Natural killer cell (primary cell): ENCODE measurements at regions of chr3 and their contacts with region 1.

Region 1: GRCh38 chr3:32018757-32019564 is 37.4 kb downstream of the ZNF860 start:
- DNase-seq: peak in 1 of 2 donors; percentile 64
- ATAC-seq: peak in 1 of 3 donors; percentile 52
- H3K4me3 ChIP-seq: no peak overlapping the region
- H3K4me3 Mint-ChIP-seq: no peak overlapping the region
- H3K27ac ChIP-seq: no peak overlapping the region
- H3K27ac Mint-ChIP-seq: no peak overlapping the region
- H3K4me1 ChIP-seq: no peaks in the 10 kb centered on the region
- H3K4me1 Mint-ChIP-seq: no peaks in the 10 kb centered on the region
- H3K27me3 ChIP-seq: no peaks in the 10 kb centered on the region
- H3K27me3 Mint-ChIP-seq: peaks cover 0 to 2% of the 10 kb centered on the region in 2 donors
- CTCF ChIP-seq: peak; percentile 74

Region 2: DNA sequence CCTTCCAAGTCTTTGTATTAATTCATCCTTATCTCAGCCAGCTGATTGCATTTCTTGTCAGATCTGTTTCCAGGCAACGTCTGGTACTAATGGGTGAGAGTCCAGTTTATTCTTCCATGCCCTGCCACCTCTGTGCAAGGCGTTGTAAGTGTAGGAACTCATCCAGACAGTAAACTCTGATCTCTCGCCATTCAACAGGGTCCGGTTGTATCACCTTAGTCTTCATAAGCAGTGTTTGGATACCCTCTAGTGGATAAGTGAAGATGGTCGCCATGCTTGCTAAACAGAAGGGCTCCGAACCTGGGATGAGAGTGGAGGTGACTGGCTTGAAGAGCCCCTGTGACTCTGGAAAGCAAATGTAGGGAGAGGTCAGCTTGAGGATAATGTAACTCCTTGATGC is 321.1 kb after region 1 on chr3:
- intact Hi-C with region 1: loop called (anchors 10 kb)
- DNase-seq: peak in 1 of 2 donors; percentile 73
- ATAC-seq: no peak
- H3K4me3 ChIP-seq: no peak overlapping the region
- H3K4me3 Mint-ChIP-seq: no peak overlapping the region
- H3K27ac ChIP-seq: no peak overlapping the region
- H3K27ac Mint-ChIP-seq: no peak overlapping the region
- H3K4me1 ChIP-seq: no peaks in the 10 kb centered on the region
- H3K4me1 Mint-ChIP-seq: no peaks in the 10 kb centered on the region
- H3K27me3 ChIP-seq: no peaks in the 10 kb centered on the region
- H3K27me3 Mint-ChIP-seq: no peaks in the 10 kb centered on the region
- CTCF ChIP-seq: no peak